ENCODE measurements at regions of chr6 and their contacts with region 1.

Region 1: DNA sequence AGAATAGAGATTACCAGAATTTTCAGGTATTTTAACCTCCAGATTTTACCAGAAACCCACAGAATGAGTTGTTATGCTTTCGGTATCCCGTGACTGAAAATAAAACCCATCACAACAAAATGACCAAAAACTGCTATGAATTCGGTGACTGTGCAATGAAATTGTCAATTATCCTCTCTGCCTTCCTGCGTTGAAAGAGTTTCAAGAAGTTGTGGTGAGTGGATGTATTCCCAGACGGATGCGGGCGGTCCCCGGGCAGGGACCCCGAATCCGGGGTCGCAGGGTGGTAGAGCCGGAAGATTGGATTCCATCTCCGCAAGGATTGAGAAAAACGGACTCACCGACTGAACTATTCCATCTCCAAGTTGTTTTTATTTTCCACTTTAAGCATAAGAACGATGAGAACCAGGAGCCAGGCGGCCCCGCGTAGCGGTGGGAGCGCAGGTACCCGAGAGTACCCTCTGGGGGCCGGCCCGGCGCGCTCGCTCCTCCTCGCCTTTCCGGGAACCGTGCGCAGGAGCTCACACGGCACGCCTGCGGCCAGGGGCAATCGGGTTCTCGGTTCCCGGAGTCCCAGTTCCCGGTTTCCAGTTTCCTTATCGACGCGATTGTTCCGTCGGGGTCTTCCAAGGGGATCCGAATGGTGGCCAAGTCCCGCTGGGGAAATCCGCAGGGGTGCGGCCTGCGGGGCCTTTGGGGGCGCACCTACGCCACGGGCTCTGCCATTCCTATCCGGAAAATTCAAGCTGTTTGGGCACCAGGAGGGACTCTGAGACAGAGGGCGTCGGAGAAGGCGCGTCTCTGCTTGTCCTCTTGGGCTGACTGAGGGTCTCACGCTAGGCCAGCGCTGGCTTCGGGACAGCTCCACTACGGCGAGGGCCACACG is 104.9 kb upstream of the PRDM1 start:
- DNase-seq: peak; percentile 66
- ATAC-seq: peak; percentile 67
- H3K4me3 Mint-ChIP-seq: peak overlapping the region; percentile 71
- H3K27ac Mint-ChIP-seq: peak overlapping the region; percentile 79
- H3K4me1 Mint-ChIP-seq: peaks cover 37% of the 10 kb centered on the region
- H3K27me3 Mint-ChIP-seq: peaks cover 50% of the 10 kb centered on the region

Region 2: GRCh38 chr6:105733565-105734162 is 247.6 kb before region 1 on chr6:
- CTCF ChIA-PET with region 1: no interaction called
- POLR2A ChIA-PET with region 1: no interaction called
- intact Hi-C with region 1: loop called in 1 of 2 experiments (anchors 5 kb)
- DNase-seq: no peak
- ATAC-seq: no peak
- H3K4me3 Mint-ChIP-seq: no peak overlapping the region
- H3K27ac Mint-ChIP-seq: no peak overlapping the region
- H3K4me1 Mint-ChIP-seq: no peaks in the 10 kb centered on the region
- H3K27me3 Mint-ChIP-seq: peaks cover 2% of the 10 kb centered on the region

Region 3: DNA sequence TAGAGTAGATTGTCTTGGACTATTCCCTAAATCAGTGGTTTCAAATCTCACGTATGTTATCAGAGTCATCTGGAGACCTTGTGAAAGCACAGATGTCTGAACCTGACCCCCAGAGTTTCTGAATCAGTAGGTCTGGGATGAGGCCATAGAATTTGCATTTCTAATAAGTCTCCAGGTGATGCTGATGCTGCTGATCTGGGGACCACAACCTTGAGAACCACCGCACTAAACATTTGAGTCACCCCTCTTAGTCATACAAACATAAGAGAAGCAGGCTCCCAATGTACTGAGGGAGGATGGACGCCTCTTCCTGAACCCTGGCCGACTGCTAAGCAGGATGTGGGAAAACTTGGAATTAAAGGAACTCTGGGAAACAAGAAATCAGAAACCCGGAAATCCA is 83.0 kb before region 1 on chr6:
- CTCF ChIA-PET with region 1: interaction called, 3 read pairs
- POLR2A ChIA-PET with region 1: interaction called, 7 read pairs
- intact Hi-C with region 1: loop called (anchors 1 kb)
- DNase-seq: peak; percentile 43
- ATAC-seq: peak; percentile 62
- H3K4me3 Mint-ChIP-seq: no peak overlapping the region
- H3K27ac Mint-ChIP-seq: no peak overlapping the region
- H3K4me1 Mint-ChIP-seq: peaks cover 24% of the 10 kb centered on the region
- H3K27me3 Mint-ChIP-seq: peaks cover 4% of the 10 kb centered on the region

Region 4: DNA sequence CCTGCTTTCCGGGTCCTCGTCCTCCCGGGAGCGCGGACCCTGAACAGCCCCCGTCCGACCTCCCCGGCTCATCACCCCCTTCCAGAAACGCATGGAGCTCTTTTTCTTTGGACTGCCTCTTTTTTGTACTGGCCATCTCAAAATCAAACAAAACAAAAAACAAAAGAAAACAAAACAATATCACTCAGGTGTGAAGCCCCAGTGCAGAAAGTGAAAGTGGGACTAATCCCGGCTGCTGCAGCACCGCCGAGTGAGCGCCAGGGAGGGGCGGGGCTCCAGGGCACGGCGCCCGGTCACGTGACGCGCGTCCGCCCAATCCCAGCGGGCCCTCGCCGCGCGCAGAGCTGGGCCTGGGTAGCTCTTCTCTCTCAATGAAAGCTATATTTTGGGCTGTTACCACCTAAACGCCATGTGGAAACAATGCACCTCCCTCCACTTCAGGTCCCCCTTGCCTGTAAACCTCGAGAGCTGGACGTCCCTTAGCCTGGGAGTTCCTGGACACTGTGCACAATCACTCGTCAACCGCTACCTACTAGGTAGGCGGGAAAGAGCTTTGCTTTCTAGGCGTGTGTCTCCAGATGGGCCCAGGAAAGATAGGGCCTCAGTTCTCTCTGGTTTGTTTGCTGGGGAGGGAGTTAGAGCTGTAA is 11.2 kb after region 1 on chr6:
- CTCF ChIA-PET with region 1: interaction called, 49 read pairs
- POLR2A ChIA-PET with region 1: interaction called, 17 read pairs
- intact Hi-C with region 1: loop called in 1 of 2 experiments (anchors 1 kb)
- DNase-seq: peak; percentile 94
- ATAC-seq: peak; percentile 93
- H3K4me3 Mint-ChIP-seq: peak overlapping the region; percentile 88
- H3K27ac Mint-ChIP-seq: peak overlapping the region; percentile 91
- H3K4me1 Mint-ChIP-seq: peaks cover 32% of the 10 kb centered on the region
- H3K27me3 Mint-ChIP-seq: peaks cover 61% of the 10 kb centered on the region

Region 5: DNA sequence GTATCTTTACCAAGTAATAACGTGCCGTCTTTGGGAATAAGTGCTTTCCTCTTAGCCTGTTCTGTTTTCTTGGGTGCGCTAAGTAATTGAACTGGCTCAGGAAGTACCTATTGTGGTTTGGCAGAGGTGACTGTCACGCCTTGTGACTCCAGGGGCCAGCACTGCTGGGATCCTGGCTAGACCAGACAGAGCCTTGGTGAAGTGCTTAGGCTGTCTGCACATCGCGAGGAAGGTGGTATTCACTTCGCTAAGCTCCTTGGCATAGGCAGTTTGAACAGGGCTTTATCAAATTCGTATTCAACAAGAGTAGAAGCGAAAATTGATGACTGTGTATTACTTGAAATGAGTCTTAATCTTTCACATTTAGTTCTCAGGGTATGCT is 122.5 kb after region 1 on chr6:
- CTCF ChIA-PET with region 1: no interaction called
- POLR2A ChIA-PET with region 1: interaction called, 5 read pairs
- intact Hi-C with region 1: loop called (anchors 1 kb)
- DNase-seq: peak; percentile 65
- ATAC-seq: peak; percentile 47
- H3K4me3 Mint-ChIP-seq: peak overlapping the region; percentile 82
- H3K27ac Mint-ChIP-seq: peak overlapping the region; percentile 62
- H3K4me1 Mint-ChIP-seq: peaks cover 77% of the 10 kb centered on the region
- H3K27me3 Mint-ChIP-seq: peaks cover 16% of the 10 kb centered on the region

Measured in activated CD4-positive, alpha-beta T cell treated with anti-CD3 and anti-CD28 coated beads for 36 hours (primary cell).